GM12878 (cell line): ENCODE measurements at regions of chr11 and their contacts with region 1.

Region 1: GRCh38 chr11:44047931-44048431 is at the start of gene ACCSL:
- DNase-seq: no peak
- ATAC-seq: no peak
- H3K4me3 ChIP-seq: no peak within 1 kb of the TSS
- H3K27ac ChIP-seq: no peak within 1 kb of the TSS
- H3K4me1 ChIP-seq: no peaks in the 10 kb centered on the region
- H3K27me3 ChIP-seq: no peaks in the 10 kb centered on the region; a peak in 1 of 4 replicates
- CTCF ChIP-seq: no peak
- EP300 ChIP-seq: no peak
- POLR2A ChIP-seq: no peak
- RAD21 ChIP-seq: no peak
- polyA plus RNA-seq, gene ACCSL: not detected

Region 2: DNA sequence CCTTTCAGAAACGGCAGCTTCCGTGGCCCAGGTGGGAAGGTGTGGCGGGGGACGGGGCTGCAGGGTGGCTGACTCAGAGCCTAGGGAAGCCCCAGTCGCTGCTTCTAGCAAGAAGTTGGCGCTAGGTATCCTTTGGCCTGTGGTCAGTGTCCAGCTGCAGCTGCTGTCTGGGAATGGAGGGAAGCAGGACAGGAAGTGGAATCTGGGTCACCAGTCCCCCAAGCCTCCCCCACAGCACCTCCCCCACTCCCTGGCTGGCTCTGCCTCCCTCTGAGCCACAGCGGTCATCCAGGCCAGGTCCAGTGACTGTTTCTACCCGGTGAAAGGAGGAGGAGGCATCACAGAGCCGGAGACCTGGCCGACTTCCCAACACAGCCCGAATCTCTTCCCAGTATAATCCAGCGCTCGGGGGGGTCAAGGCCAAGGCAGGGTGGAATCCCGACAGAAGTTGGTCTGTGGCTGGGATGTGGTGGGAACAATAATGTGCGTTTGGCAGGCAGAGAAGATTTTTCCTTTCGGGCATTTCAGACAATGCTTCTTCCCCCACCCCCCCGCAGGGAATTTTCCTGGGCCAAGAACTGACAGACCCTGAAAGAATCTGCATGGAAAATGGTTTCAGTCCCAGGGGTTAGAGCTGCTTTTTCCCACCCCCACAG is 60.5 kb before region 1 on chr11:
- CTCF ChIA-PET with region 1: no interaction called
- POLR2A ChIA-PET with region 1: no interaction called
- RAD21 ChIA-PET with region 1: no interaction called
- SMC1A ChIA-PET with region 1: no interaction called
- in situ Hi-C with region 1: no loop called
- intact Hi-C with region 1: loop called (anchors 10 kb)
- DNase-seq: no peak
- ATAC-seq: no peak
- H3K4me3 ChIP-seq: no peak overlapping the region
- H3K27ac ChIP-seq: no peak overlapping the region
- H3K4me1 ChIP-seq: no peaks in the 10 kb centered on the region
- H3K27me3 ChIP-seq: no peaks in the 10 kb centered on the region; a peak in 1 of 4 replicates
- CTCF ChIP-seq: no peak
- EP300 ChIP-seq: no peak
- POLR2A ChIP-seq: no peak
- RAD21 ChIP-seq: no peak

Region 3: DNA sequence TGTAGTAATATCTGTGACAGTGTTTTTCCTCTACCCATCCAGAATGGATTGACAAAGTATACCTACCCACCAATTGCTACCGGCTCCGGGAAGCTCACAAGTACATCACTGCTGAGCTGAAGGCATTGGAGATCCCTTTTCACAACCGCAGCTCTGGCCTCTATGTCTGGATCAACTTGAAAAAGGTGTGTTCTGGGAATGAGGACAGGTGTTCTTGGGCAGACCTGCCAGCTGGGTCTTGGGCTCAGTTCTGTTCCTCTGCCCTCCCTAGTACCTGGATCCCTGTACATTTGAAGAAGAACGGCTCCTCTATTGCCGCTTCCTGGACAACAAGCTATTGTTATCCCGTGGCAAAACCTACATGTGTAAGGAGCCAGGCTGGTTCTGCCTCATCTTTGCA is 10.3 kb after region 1 on chr11:
- CTCF ChIA-PET with region 1: no interaction called
- POLR2A ChIA-PET with region 1: no interaction called
- RAD21 ChIA-PET with region 1: no interaction called
- SMC1A ChIA-PET with region 1: no interaction called
- in situ Hi-C with region 1: no loop called
- intact Hi-C with region 1: no loop called
- DNase-seq: no peak
- ATAC-seq: no peak
- H3K4me3 ChIP-seq: no peak overlapping the region
- H3K27ac ChIP-seq: no peak overlapping the region
- H3K4me1 ChIP-seq: no peaks in the 10 kb centered on the region
- H3K27me3 ChIP-seq: peaks cover 0 to 1% of the 10 kb centered on the region in 2 experiments; a peak in 1 of 4 replicates
- CTCF ChIP-seq: no peak
- EP300 ChIP-seq: no peak
- POLR2A ChIP-seq: no peak
- RAD21 ChIP-seq: no peak

Region 4: GRCh38 chr11:44083906-44084305 is 35.9 kb after region 1 on chr11:
- CTCF ChIA-PET with region 1: no interaction called
- POLR2A ChIA-PET with region 1: no interaction called
- RAD21 ChIA-PET with region 1: no interaction called
- SMC1A ChIA-PET with region 1: no interaction called
- in situ Hi-C with region 1: no loop called
- intact Hi-C with region 1: no loop called
- DNase-seq: no peak
- ATAC-seq: no peak
- H3K4me3 ChIP-seq: no peak overlapping the region
- H3K27ac ChIP-seq: no peak overlapping the region
- H3K4me1 ChIP-seq: no peaks in the 10 kb centered on the region
- H3K27me3 ChIP-seq: no peaks in the 10 kb centered on the region
- CTCF ChIP-seq: no peak
- EP300 ChIP-seq: no peak
- POLR2A ChIP-seq: no peak
- RAD21 ChIP-seq: no peak